ENCODE measurements at regions of chr16 and their contacts with region 1.

Region 1: GRCh38 chr16:27367461-27368357 is 34.3 kb upstream of the IL21R start:
- DNase-seq: peak; percentile 68
- H3K4me3 ChIP-seq: peak overlapping the region in 1 of 3 experiments; percentile 19
- H3K27ac ChIP-seq: peak overlapping the region; percentile 43
- H3K4me1 ChIP-seq: peaks cover 46% of the 10 kb centered on the region
- H3K27me3 ChIP-seq: no peaks in the 10 kb centered on the region
- CTCF ChIP-seq: peak; percentile 56 to 84

Region 2: DNA sequence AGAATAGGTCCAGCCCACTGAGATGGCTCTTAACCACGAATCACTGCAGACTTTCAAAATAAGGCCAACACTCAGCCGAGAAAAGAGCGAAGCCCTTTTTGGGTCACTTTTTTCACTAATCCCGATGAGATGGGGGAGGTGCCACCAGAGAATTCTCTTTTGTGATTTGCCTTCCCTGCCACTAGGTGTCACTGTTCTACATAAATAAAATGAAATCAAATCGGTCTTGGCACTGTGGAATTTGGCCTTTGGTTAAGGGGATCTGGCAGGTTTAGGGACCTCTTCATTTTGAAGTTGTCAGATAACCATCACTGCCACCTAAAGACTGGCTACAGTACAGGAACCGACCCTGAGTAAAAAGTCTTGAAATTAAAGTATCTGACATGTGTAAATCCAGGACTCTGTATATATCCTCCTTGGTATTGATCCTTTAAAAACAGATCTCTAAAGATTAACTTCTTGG is 1529.0 kb before region 1 on chr16:
- CTCF ChIA-PET with region 1: no interaction called
- dilution Hi-C with region 1: no loop called
- in situ Hi-C with region 1: no loop called
- intact Hi-C with region 1: loop called (anchors 5 kb)
- DNase-seq: peak; percentile 13
- H3K4me3 ChIP-seq: no peak overlapping the region
- H3K27ac ChIP-seq: no peak overlapping the region
- H3K4me1 ChIP-seq: no peaks in the 10 kb centered on the region
- H3K27me3 ChIP-seq: no peaks in the 10 kb centered on the region
- CTCF ChIP-seq: peak; percentile 67

Region 3: DNA sequence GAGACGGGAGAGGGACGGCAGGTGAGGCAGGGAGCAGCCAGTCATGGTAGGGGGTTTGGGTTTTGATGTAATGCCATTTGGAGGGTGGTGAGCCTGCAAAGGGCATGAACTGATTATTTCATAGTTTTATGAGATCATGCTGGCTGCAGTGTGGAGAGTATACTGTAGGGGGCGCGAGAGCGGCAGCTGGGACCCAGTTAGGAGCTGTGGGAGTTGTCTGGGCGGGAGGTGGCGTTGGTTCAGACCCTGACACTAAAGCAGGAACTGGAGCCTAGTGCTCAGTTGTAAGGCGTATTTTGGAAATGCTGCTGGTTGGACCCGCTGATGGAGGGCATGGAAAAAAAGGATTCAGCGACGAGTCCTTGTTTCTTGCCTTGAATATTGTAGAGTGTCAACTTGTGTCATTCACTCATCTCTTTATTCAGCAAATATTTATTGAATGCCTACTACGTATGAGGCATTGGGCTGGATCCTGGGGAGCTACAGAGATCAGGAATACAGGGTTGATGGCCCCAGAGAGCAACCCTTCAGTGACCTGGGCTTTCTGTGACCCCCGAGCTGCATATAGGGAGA is 188.1 kb before region 1 on chr16:
- CTCF ChIA-PET with region 1: interaction called, 6 read pairs
- dilution Hi-C with region 1: no loop called
- in situ Hi-C with region 1: loop called in 1 of 2 experiments (anchors 10 kb)
- intact Hi-C with region 1: loop called (anchors 1 kb)
- DNase-seq: peak; percentile 42
- H3K4me3 ChIP-seq: no peak overlapping the region
- H3K27ac ChIP-seq: no peak overlapping the region
- H3K4me1 ChIP-seq: peaks cover 13% of the 10 kb centered on the region
- H3K27me3 ChIP-seq: no peaks in the 10 kb centered on the region
- CTCF ChIP-seq: peak; percentile 82 to 90

Region 4: GRCh38 chr16:27326738-27327585 is 40.7 kb before region 1 on chr16:
- CTCF ChIA-PET with region 1: no interaction called
- dilution Hi-C with region 1: no loop called
- in situ Hi-C with region 1: no loop called
- intact Hi-C with region 1: loop called (anchors 2 kb)
- DNase-seq: peak; percentile 96
- H3K4me3 ChIP-seq: no peak overlapping the region
- H3K27ac ChIP-seq: peak overlapping the region; percentile 92
- H3K4me1 ChIP-seq: peaks cover 66% of the 10 kb centered on the region
- H3K27me3 ChIP-seq: no peaks in the 10 kb centered on the region
- CTCF ChIP-seq: peak in 1 of 2 donors; percentile 8

Region 5: DNA sequence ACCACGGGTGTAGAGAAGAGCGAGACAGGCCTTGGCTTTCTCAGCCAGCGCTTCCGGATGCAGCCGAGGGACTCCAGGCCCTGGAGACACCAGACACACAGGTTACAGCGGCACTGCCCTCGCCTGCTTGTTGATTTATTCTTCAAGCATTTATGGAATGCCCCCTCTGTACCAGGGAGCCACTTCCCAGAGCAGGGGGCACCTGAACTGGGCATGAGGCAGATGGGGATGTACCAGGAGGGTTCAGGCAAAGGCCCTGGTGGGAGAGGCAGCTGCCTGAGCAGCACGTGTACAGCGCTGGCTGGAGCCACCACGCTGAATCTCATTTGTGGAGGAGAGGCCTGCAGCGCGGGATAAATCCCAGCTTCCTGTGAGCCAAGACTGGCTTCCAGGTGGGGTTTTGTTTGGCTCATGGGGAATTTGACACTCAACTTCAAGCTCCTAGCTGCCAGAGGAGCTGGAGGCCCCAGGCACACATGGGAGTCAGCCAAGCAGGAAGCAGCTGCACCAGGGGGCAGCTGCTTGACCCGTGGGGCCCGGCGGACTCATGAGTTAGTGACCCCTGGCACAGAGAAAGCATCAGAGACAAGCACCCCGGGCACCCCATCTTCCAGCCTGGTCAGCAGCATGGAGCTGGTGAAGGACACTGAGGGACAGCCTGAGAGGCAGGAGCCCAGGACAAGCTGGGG is 93.9 kb after region 1 on chr16:
- CTCF ChIA-PET with region 1: no interaction called
- dilution Hi-C with region 1: loop called (anchors 5 kb)
- in situ Hi-C with region 1: no loop called
- intact Hi-C with region 1: loop called (anchors 1 kb)
- DNase-seq: no peak
- H3K4me3 ChIP-seq: no peak overlapping the region
- H3K27ac ChIP-seq: no peak overlapping the region
- H3K4me1 ChIP-seq: peaks cover 12% of the 10 kb centered on the region
- H3K27me3 ChIP-seq: no peaks in the 10 kb centered on the region
- CTCF ChIP-seq: no peak

Measured in mammary epithelial cell (primary cell).